Mammary epithelial cell (primary cell): ENCODE measurements at regions of chrX and their contacts with region 1.

Region 1: GRCh38 chrX:74343343-74344279 is 39.6 kb downstream of the ZCCHC13 start:
- DNase-seq: peak; percentile 92
- H3K4me3 ChIP-seq: no peak overlapping the region
- H3K27ac ChIP-seq: no peak overlapping the region
- H3K4me1 ChIP-seq: no peaks in the 10 kb centered on the region
- H3K27me3 ChIP-seq: no peaks in the 10 kb centered on the region
- CTCF ChIP-seq: peak; percentile 63 to 65

Region 2: DNA sequence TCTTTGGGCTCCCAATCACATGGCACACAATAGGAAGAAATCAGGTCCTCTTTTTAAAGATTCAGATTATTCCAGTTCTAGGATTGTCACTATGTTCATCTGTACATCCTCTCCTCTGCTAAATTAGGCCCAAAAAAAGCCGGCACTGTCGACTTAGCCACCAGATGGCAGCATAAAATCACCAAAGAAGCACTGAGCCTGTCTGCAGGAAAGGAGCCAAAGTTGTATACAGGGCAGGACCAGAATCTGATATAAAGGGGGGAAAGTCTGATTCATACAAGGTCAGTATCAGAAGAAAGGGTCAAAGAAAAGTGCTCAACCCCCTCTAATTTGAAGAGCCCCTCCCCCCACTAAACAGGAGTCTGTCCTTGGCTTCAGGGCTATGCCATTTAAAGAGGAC is 488.1 kb before region 1 on chrX:
- CTCF ChIA-PET with region 1: no interaction called
- dilution Hi-C with region 1: no loop called
- in situ Hi-C with region 1: loop called in 1 of 2 experiments (anchors 10 kb)
- intact Hi-C with region 1: loop called (anchors 1 kb)
- DNase-seq: peak; percentile 60
- H3K4me3 ChIP-seq: no peak overlapping the region
- H3K27ac ChIP-seq: no peak overlapping the region
- H3K4me1 ChIP-seq: no peaks in the 10 kb centered on the region
- H3K27me3 ChIP-seq: no peaks in the 10 kb centered on the region
- CTCF ChIP-seq: peak; percentile 85 to 88

Region 3: GRCh38 chrX:74232859-74233258 is 110.8 kb before region 1 on chrX:
- CTCF ChIA-PET with region 1: interaction called, 3 read pairs
- dilution Hi-C with region 1: no loop called
- in situ Hi-C with region 1: no loop called
- intact Hi-C with region 1: loop called (anchors 5 kb)
- DNase-seq: peak; percentile 24
- H3K4me3 ChIP-seq: no peak overlapping the region
- H3K27ac ChIP-seq: no peak overlapping the region
- H3K4me1 ChIP-seq: no peaks in the 10 kb centered on the region
- H3K27me3 ChIP-seq: no peaks in the 10 kb centered on the region
- CTCF ChIP-seq: peak in 1 of 2 donors; percentile 25